ENCODE measurements at regions of chr16 and their contacts with region 1.

Region 1: GRCh38 chr16:85296859-85297660 is 184.8 kb upstream of the CIBAR2 start:
- DNase-seq: no peak
- H3K4me3 ChIP-seq: no peak overlapping the region
- H3K27ac ChIP-seq: no peak overlapping the region
- H3K4me1 ChIP-seq: no peaks in the 10 kb centered on the region
- H3K27me3 ChIP-seq: no peaks in the 10 kb centered on the region
- CTCF ChIP-seq: peak; percentile 62 to 87

Region 2: DNA sequence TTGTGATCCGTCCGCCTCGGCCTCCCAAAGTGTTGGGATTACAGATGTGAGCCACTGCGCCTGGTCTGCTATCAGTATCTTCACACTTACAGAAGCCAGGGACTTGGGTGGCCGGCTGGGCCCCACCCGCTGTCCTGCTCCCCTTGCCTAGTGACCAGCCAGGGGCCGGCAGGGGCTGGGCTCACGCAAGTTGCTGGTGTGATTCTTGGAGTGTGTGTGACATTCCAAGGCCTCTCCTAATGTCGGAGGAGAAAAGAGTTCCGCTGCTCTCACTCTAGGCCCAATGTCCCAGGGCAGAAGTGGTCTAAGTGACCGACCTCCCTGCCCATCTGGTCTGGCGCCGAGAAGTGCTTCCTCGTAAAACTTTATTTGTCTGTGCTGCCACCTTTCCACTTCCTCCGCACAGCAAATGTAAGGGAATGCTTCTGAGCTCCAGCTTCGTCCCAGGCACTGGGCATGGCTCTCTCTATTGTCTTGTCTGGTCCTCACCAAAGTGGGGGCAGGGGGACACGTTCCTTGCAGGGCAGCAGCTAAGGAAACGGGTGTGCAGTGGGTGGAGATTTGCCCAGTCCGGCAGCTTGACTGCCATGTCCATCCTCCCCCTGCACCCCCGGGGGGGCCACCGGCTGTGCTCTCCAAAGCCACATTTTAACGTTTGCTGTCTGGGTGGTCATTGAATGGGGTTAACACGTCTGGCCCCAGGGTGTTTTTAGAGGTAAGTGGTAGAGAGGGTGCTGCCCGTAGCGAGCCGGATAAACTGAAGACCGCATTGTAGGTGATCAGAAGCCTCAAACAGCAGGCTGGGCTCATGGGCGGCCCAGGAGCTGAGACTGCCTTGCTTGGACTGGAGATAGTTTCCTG is 308.2 kb after region 1 on chr16:
- CTCF ChIA-PET with region 1: no interaction called
- dilution Hi-C with region 1: no loop called
- in situ Hi-C with region 1: loop called (anchors 25 kb)
- intact Hi-C with region 1: loop called (anchors 2 kb)
- DNase-seq: no peak
- H3K4me3 ChIP-seq: no peak overlapping the region
- H3K27ac ChIP-seq: no peak overlapping the region
- H3K4me1 ChIP-seq: peaks cover 5% of the 10 kb centered on the region
- H3K27me3 ChIP-seq: no peaks in the 10 kb centered on the region
- CTCF ChIP-seq: no peak

Measured in mammary epithelial cell (primary cell).